ENCODE measurements at regions of chr19 and their contacts with region 1.

Region 1: GRCh38 chr19:7680606-7681339 is at the start of gene TRAPPC5:
- DNase-seq: peak; percentile 39 to 75
- ATAC-seq: peak; percentile 70 to 83
- H3K4me3 ChIP-seq: peak within 1 kb of the TSS; percentile 99
- H3K27ac ChIP-seq: peak within 1 kb of the TSS; percentile 99
- H3K4me1 ChIP-seq: peaks cover 10% of the 10 kb centered on the region; the same call in 2 of the 3 replicates
- CTCF ChIP-seq: peak; percentile 88
- EP300 ChIP-seq: no peak
- POLR2A ChIP-seq: peak; percentile 61
- RAD21 ChIP-seq: peak; percentile 68 to 89
- polyA plus RNA-seq, gene TRAPPC5: 23.8 and 31.6 TPM in 2 replicates

Region 2: DNA sequence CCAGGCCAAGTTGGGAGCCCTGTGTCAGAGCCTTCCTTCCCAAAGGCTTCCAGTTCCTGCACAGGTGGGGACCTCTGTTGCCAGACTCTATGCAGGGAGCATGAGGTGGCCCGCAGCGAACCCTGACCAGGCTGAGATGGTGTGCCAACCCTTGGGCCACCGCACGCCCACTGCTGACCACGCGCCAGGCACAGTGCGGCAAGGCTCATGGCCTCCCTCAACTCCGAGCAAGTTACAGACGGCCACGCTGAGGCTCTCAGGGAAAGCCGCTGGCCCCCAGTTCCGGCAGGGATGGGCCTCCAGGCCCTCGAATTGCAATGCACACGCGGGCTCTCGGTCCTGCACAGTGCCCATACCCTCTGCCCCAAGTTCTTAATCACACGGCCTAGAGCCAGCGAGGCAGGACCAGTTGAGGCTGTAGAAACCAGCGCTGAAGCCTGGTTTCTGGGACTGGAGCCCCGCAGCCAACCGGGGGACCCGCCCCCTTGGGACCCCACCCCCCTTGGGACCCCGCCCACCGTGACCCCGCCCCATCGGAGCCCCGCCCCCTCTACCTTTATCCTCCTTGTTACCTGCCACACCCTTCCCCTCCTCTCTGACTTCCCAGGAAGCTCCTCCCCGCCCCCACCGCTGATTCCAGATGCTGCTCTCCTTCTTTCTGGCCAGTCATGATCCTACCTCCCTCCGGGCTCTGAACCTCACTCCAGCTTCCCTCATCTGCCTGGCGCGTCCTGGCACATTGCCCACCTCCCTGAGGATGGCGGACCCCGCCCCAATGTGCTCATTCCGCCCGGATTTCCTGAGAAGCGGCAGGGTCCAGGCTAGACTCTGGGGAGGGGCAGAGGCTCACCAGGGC is 198.0 kb before region 1 on chr19:
- CTCF ChIA-PET with region 1: no interaction called
- POLR2A ChIA-PET with region 1: no interaction called
- DNase-seq: no peak
- ATAC-seq: peak in 1 of 2 experiments; percentile 30; a peak in 2 of 6 replicates
- H3K4me3 ChIP-seq: no peak overlapping the region
- H3K27ac ChIP-seq: no peak overlapping the region
- H3K4me1 ChIP-seq: no peaks in the 10 kb centered on the region
- CTCF ChIP-seq: no peak
- EP300 ChIP-seq: no peak
- POLR2A ChIP-seq: no peak
- RAD21 ChIP-seq: no peak

Region 3: GRCh38 chr19:7652061-7652641 is 28.6 kb before region 1 on chr19:
- CTCF ChIA-PET with region 1: interaction called, 21 read pairs
- POLR2A ChIA-PET with region 1: no interaction called
- DNase-seq: peak; percentile 75 to 85
- ATAC-seq: peak; percentile 76 to 84
- H3K4me3 ChIP-seq: peak overlapping the region; percentile 31; the same call in 1 of the 3 replicates
- H3K27ac ChIP-seq: peak overlapping the region; percentile 32 to 76; a peak in 5 of 6 replicates
- H3K4me1 ChIP-seq: no peaks in the 10 kb centered on the region
- CTCF ChIP-seq: peak; percentile 88
- EP300 ChIP-seq: no peak
- POLR2A ChIP-seq: no peak
- RAD21 ChIP-seq: peak; percentile 44 to 59; a peak in 4 of 5 replicates

Region 4: DNA sequence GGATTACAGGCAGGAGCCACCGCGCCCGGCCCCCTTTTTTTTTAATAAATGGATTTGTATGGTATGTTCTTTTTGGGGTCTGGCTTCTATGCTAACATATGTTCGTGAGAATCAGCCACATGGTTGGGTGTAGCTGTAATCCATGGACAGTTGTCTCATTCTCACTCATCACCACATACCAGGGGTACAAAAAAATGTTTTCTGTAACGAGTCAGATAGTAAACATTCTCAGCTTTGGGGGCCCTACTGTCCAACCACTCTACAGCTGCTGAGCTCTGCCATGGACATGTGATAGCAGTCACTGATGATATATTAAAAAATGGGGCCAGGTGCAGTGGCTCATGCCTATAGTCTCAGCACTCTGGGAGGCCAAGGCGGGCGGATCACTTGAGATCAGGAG is 17.1 kb before region 1 on chr19:
- CTCF ChIA-PET with region 1: interaction called, 34 read pairs
- POLR2A ChIA-PET with region 1: no interaction called
- DNase-seq: no peak
- ATAC-seq: no peak
- H3K4me3 ChIP-seq: no peak overlapping the region
- H3K27ac ChIP-seq: no peak overlapping the region
- H3K4me1 ChIP-seq: no peaks in the 10 kb centered on the region
- CTCF ChIP-seq: no peak
- EP300 ChIP-seq: no peak
- POLR2A ChIP-seq: no peak
- RAD21 ChIP-seq: no peak

Region 5: GRCh38 chr19:7670150-7670783 is 10.5 kb before region 1 on chr19:
- CTCF ChIA-PET with region 1: interaction called, 34 read pairs
- POLR2A ChIA-PET with region 1: no interaction called
- DNase-seq: no peak
- ATAC-seq: peak; percentile 10 to 32; a peak in 2 of 6 replicates
- H3K4me3 ChIP-seq: peak overlapping the region; percentile 27; the same call in 2 of the 3 replicates
- H3K27ac ChIP-seq: no peak overlapping the region
- H3K4me1 ChIP-seq: no peaks in the 10 kb centered on the region
- CTCF ChIP-seq: no peak
- EP300 ChIP-seq: no peak
- POLR2A ChIP-seq: no peak
- RAD21 ChIP-seq: no peak

Region 6: GRCh38 chr19:7725791-7726190 is 45.0 kb after region 1 on chr19:
- CTCF ChIA-PET with region 1: interaction called, 10 read pairs
- POLR2A ChIA-PET with region 1: no interaction called
- DNase-seq: no peak
- ATAC-seq: no peak
- H3K4me3 ChIP-seq: no peak overlapping the region
- H3K27ac ChIP-seq: no peak overlapping the region
- H3K4me1 ChIP-seq: no peaks in the 10 kb centered on the region
- CTCF ChIP-seq: no peak
- EP300 ChIP-seq: no peak
- POLR2A ChIP-seq: no peak
- RAD21 ChIP-seq: no peak

Region 7: GRCh38 chr19:7799640-7800355 is 119.0 kb after region 1 on chr19:
- CTCF ChIA-PET with region 1: interaction called, 36 read pairs
- POLR2A ChIA-PET with region 1: interaction called, 3 read pairs
- DNase-seq: peak; percentile 45 to 67
- ATAC-seq: peak; percentile 77 to 83
- H3K4me3 ChIP-seq: peak overlapping the region; percentile 24; the same call in 1 of the 3 replicates
- H3K27ac ChIP-seq: no peak overlapping the region
- H3K4me1 ChIP-seq: no peaks in the 10 kb centered on the region
- CTCF ChIP-seq: peak; percentile 60
- EP300 ChIP-seq: no peak
- POLR2A ChIP-seq: no peak
- RAD21 ChIP-seq: peak; percentile 68 to 75